HEK293T (cell line): ENCODE measurements at regions of chr22 and their contacts with region 1.

Region 1: DNA sequence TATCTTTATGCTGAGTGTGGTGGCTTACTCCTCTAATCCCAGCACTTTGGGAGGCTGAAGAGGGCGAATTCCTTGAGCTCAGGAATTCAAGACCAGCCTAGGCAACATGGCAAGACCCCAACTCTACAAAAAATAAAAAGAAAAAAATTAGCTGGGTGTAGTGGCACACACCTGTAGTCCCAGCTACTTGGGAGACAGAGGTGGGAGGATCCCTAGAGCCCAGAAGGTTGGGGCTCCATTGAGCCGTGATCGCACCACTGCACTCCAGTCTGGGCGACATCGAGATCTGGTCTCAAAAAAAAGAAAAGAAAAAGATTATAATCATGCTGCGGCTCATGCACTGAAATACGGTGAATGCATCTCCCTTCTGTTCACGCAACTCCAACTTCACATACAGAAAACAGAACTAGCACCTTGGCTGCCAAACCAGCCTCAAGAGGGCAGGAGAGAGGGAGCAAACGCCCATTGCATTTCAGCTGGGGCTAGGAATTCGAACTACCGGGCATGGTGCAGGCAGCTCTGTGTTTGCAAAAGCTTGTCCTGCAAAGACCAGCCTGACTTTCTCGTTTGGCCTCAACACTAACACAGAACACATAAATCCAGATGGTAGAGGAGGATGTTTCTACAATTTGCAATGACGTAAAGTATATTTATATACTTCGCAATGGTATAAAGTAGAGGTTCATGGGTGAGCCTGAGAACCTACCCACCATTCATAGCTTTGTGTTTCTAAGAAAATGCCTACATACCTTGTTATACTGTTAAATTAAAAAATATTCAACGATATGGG is 6.3 kb upstream of the SYNGR1 start:
- DNase-seq: peak; percentile 81

Region 2: DNA sequence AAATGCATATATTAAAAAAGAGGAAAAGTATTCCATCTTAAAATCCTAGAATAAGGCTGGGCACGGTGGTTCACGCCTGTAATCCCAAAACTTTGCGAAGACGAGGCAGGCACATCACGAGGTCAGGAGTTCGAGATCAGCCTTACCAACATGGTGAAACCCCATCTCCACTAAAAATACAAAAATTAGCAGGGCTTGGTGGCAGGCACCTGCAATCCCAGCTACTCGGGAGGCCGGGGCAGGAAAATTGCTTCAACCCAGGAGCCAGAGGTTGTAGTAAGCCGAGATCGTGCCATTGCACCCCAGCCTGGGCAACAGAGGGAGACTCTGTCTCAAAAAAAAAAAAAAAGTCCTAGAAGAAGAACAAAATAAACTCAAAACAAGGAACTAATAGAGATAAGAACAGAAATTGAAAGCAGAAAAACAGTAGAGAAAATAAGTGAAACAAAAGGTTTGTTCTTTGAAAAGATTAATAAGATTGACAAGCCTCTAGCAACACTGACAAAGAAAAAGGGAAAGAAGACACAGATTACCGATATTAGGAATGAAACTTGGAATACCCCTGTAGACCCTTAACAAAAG is 146.0 kb before region 1 on chr22:
- CTCF ChIA-PET with region 1: no interaction called
- POLR2A ChIA-PET with region 1: no interaction called
- DNase-seq: no peak

Region 3: DNA sequence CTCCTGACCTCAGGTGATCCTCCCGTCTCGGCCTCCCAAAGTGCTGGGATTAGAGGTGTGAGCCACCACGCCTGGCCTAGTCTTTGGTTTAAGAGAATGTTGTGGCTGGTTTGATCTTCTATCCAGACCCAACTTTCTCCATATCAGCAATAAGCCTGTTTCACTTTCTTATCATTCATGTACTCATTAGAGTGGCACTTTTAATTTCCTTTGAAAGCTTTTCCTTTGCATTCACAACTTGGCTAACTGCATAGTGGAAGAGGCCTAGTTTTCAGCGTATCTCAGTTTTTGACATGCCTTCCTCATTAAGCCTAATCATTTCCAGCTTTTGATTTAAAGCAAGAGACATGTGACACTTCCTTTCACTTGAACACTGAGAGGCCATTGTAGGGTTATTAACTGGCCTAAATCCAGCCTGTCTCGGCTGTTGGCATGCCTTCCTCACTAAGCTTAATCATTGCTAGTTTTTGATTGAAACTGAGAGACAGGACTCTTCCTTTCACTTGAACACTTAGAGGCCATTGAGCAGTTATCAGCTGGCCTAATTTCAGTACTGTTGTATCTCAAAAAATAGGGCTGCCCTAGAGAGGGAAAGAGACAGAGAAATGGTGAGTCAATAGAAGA is 10.9 kb before region 1 on chr22:
- CTCF ChIA-PET with region 1: interaction called, 13 read pairs
- POLR2A ChIA-PET with region 1: interaction called, 5 read pairs
- DNase-seq: no peak

Region 4: DNA sequence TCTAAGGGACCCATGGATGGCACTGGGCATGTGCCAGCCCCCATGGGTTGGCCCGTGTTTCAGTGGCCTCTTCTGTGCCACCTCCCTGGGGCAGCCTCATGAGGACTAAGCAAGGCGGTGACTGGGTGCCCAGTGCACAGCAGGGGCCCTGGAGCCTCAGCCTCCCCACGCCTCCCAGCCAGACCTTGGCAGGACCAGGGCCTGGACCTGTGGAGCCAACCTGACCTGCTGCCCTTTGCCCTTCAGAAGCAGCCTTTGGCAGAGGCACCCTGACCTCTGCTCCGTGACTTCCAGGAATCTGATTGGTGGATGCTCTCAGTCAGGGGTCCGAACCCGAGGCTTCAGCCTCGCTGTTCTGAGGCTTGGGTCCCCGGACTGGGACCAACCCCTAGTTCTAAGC is 31.3 kb after region 1 on chr22:
- CTCF ChIA-PET with region 1: interaction called, 10 read pairs
- POLR2A ChIA-PET with region 1: interaction called, 3 read pairs
- DNase-seq: no peak